MCF 10A (cell line): ENCODE measurements at regions of chr6 and their contacts with region 1.

Region 1: DNA sequence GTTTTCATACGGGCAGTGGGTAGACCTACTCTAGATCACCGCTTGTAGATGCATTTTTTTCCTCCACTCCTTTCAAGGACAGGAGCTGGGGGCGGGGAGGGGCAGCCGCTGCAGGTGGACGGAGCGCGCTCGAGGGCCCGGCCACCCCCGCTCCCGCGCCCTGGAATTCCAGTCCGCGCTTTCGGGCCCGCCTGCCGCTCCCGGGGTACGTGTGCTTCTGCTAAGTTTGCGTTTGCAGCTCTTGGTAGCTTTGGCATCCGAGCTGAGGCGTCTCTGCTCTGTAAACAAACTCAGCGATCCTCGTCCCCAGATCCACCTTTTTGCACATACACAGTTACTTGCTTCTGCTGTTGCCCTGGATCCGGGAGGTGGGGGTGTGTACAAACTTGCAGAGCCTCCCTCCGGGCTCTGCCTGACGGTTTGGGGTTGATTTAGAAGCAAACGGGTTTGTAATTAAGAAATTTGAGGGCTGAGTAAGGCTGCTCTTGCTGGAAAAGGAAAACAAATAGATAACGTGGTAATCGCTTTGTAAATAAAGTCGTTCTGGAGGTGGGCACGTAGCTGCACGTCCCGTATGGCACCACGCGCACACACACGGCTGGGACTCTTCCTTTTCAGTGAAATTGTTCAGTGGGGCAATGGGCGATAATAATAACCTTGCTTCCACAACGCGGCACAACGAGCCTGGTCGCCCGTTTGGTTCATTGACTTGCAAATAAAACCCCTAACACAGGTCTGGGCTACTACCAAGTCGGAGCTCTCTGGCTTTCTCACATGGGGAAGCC is 976 bp upstream of the CITED2 start:
- DNase-seq: peak; percentile 98
- H3K4me3 Mint-ChIP-seq: peak overlapping the region; percentile 97
- H3K27ac Mint-ChIP-seq: peak overlapping the region; percentile 97
- H3K4me1 Mint-ChIP-seq: peaks cover 33% of the 10 kb centered on the region
- H3K27me3 Mint-ChIP-seq: no peaks in the 10 kb centered on the region
- CTCF ChIP-seq: no peak

Region 2: DNA sequence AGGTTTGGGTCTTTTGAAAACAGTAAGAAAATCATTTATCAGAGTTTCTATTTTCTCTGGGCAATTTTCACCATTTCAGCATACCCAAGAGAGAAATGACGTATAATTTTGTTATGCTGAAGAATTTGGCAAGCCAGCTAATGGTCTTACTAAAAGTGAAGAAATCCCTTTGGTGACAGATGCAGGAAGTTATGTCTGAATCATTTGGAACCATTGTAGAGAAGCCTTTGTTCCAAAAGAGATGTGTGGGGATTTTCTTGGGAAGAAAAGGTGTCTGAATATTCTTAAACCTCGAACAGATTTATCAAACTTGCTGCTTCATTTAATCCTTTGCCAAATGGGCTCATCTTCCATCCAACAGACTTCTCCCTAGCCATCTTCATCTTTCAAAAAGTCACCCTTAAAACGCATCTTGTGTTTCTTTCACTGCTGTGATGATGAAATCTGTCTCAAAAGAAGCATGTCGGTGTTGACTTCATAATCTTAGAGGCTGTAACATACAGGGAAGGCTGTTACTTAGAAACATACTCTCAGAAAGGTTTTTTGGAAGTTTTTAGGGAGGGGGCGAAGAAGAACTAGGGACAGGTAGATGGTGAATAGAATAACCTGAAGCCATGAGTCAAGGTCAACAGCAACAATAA is 40.5 kb before region 1 on chr6:
- CTCF ChIA-PET with region 1: no interaction called
- POLR2A ChIA-PET with region 1: interaction called, 11 read pairs
- intact Hi-C with region 1: no loop called
- DNase-seq: peak; percentile 88
- H3K4me3 Mint-ChIP-seq: peak overlapping the region; percentile 26
- H3K27ac Mint-ChIP-seq: peak overlapping the region; percentile 88
- H3K4me1 Mint-ChIP-seq: peaks cover 30% of the 10 kb centered on the region
- H3K27me3 Mint-ChIP-seq: no peaks in the 10 kb centered on the region
- CTCF ChIP-seq: no peak

Region 3: DNA sequence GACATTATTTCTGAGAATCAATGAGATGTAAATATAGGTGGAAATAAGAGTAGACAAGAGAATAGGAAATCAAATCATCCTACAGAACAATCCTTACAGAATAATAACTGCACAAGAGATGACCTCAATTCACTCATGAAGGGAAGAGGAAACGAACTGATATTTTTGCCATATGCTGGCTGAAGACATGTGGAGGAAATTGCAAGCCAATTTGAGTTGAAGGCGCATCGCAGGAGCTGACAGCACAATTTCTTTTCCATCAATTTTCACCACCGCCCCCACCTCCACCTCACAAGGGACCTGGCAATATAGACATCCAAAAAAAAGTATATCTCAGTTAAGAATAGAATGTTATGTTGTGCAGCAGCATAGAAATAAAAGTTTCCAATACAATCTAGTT is 21.2 kb before region 1 on chr6:
- CTCF ChIA-PET with region 1: no interaction called
- POLR2A ChIA-PET with region 1: no interaction called
- intact Hi-C with region 1: no loop called
- DNase-seq: no peak
- H3K4me3 Mint-ChIP-seq: no peak overlapping the region
- H3K27ac Mint-ChIP-seq: no peak overlapping the region
- H3K4me1 Mint-ChIP-seq: no peaks in the 10 kb centered on the region
- H3K27me3 Mint-ChIP-seq: no peaks in the 10 kb centered on the region
- CTCF ChIP-seq: no peak

Region 4: GRCh38 chr6:139568956-139569548 is 193.6 kb after region 1 on chr6:
- CTCF ChIA-PET with region 1: no interaction called
- POLR2A ChIA-PET with region 1: interaction called, 12 read pairs
- intact Hi-C with region 1: loop called (anchors 10 kb)
- DNase-seq: peak; percentile 59
- H3K4me3 Mint-ChIP-seq: peak overlapping the region; percentile 17
- H3K27ac Mint-ChIP-seq: peak overlapping the region; percentile 86
- H3K4me1 Mint-ChIP-seq: peaks cover 25% of the 10 kb centered on the region
- H3K27me3 Mint-ChIP-seq: no peaks in the 10 kb centered on the region
- CTCF ChIP-seq: no peak

Region 5: GRCh38 chr6:139732451-139732850 is 357.0 kb after region 1 on chr6:
- CTCF ChIA-PET with region 1: interaction called, 4 read pairs
- POLR2A ChIA-PET with region 1: interaction called, 49 read pairs
- intact Hi-C with region 1: loop called (anchors 10 kb)
- DNase-seq: peak; percentile 79
- H3K4me3 Mint-ChIP-seq: peak overlapping the region; percentile 15
- H3K27ac Mint-ChIP-seq: peak overlapping the region; percentile 84
- H3K4me1 Mint-ChIP-seq: peaks cover 16% of the 10 kb centered on the region
- H3K27me3 Mint-ChIP-seq: no peaks in the 10 kb centered on the region
- CTCF ChIP-seq: no peak

Region 6: GRCh38 chr6:139981768-139982181 is 606.4 kb after region 1 on chr6:
- CTCF ChIA-PET with region 1: no interaction called
- POLR2A ChIA-PET with region 1: interaction called, 42 read pairs
- intact Hi-C with region 1: loop called (anchors 5 kb)
- DNase-seq: peak; percentile 57
- H3K4me3 Mint-ChIP-seq: peak overlapping the region; percentile 3
- H3K27ac Mint-ChIP-seq: peak overlapping the region; percentile 98
- H3K4me1 Mint-ChIP-seq: peaks cover 65% of the 10 kb centered on the region
- H3K27me3 Mint-ChIP-seq: no peaks in the 10 kb centered on the region
- CTCF ChIP-seq: no peak

Region 7: GRCh38 chr6:140285471-140285870 is 910.0 kb after region 1 on chr6:
- CTCF ChIA-PET with region 1: no interaction called
- POLR2A ChIA-PET with region 1: no interaction called
- intact Hi-C with region 1: loop called (anchors 10 kb)
- DNase-seq: no peak
- H3K4me3 Mint-ChIP-seq: no peak overlapping the region
- H3K27ac Mint-ChIP-seq: no peak overlapping the region
- H3K4me1 Mint-ChIP-seq: no peaks in the 10 kb centered on the region
- H3K27me3 Mint-ChIP-seq: no peaks in the 10 kb centered on the region
- CTCF ChIP-seq: no peak

Region 8: GRCh38 chr6:140572129-140572528 is 1196.7 kb after region 1 on chr6:
- CTCF ChIA-PET with region 1: no interaction called
- POLR2A ChIA-PET with region 1: interaction called, 3 read pairs
- intact Hi-C with region 1: loop called (anchors 10 kb)
- DNase-seq: peak; percentile 85
- H3K4me3 Mint-ChIP-seq: no peak overlapping the region
- H3K27ac Mint-ChIP-seq: no peak overlapping the region
- H3K4me1 Mint-ChIP-seq: peaks cover 15% of the 10 kb centered on the region
- H3K27me3 Mint-ChIP-seq: no peaks in the 10 kb centered on the region
- CTCF ChIP-seq: no peak